ENCODE measurements at regions of chr4 and their contacts with region 1.

Region 1: DNA sequence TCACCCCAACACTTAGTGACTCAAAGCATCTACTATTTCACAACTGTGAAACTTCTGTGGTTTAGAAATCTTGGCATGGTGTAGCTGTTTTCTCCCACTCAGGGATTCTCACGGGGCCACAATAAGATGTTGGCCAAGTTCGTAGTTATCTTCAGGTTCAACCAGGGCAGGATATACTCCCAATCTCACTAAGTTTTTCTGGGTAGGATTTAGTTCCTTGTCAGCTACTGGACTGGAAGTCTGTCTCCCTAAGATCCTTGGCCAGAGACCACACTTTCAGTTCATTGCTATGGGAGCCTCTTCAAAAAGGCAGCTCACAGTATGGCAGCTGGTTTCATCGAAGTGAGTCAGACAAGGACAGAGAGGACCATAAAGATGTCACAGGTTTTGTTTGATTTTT is 111.7 kb upstream of the PDHA2 start:
- DNase-seq: no peak
- ATAC-seq: no peak
- H3K4me3 ChIP-seq: no peak overlapping the region
- H3K4me3 Mint-ChIP-seq: no peak overlapping the region
- H3K27ac ChIP-seq: no peak overlapping the region
- H3K27ac Mint-ChIP-seq: no peak overlapping the region
- H3K4me1 ChIP-seq: no peaks in the 10 kb centered on the region
- H3K4me1 Mint-ChIP-seq: no peaks in the 10 kb centered on the region
- H3K27me3 ChIP-seq: no peaks in the 10 kb centered on the region
- H3K27me3 Mint-ChIP-seq: no peaks in the 10 kb centered on the region
- CTCF ChIP-seq: no peak

Region 2: DNA sequence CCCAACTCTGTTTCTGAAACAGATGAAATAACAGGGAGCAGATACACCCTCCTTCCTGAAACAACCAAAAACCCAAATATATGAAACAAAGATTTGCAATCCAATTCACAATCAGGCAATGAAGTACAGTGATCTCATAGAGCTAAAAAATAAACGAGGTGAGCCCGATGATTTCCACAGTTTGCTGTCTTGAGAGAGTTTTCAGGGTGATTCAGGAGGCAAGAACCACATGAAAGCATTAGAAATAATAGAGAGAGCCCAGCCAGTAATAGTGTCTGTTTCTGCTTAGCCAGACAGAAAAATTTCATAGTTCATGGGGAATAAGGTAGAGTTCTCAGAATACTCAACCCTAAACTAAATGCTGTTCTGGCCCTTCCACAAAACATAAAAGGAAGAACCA is 407.9 kb after region 1 on chr4:
- CTCF ChIA-PET with region 1: no interaction called
- POLR2A ChIA-PET with region 1: no interaction called
- intact Hi-C with region 1: no loop called
- DNase-seq: no peak
- ATAC-seq: no peak
- H3K4me3 ChIP-seq: no peak overlapping the region
- H3K4me3 Mint-ChIP-seq: no peak overlapping the region
- H3K27ac ChIP-seq: no peak overlapping the region
- H3K27ac Mint-ChIP-seq: no peak overlapping the region
- H3K4me1 ChIP-seq: no peaks in the 10 kb centered on the region
- H3K4me1 Mint-ChIP-seq: no peaks in the 10 kb centered on the region
- H3K27me3 ChIP-seq: no peaks in the 10 kb centered on the region
- H3K27me3 Mint-ChIP-seq: no peaks in the 10 kb centered on the region
- CTCF ChIP-seq: no peak

Region 3: DNA sequence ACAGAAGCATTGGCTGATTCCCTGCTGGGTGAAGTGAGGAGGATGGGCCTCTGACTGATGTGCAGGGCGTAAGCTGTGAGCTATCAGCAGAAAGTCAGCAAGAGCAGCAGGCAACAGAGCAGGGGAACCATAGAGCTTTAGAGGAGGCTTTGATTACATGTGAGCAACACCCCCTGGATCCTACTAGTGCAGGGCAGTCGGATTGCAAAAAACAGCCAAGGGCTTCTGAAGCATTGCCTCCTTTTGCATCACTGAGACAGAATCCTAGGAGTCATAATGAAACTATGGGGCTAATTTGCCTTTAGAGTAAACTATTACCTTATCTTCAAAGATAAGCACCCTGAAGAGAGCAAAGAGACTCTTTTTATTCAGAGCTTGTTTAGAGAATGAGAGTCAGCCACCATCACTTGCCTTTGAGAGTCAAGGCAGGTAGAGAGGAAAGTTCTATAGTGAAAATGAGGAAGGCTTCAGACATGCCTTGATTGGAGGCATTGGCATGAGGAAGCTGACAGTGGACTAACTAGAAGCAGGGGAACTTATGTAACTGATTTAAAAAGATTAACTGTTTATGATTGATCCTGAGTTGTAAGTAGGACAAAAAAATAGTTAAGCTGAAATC is 532.0 kb after region 1 on chr4:
- CTCF ChIA-PET with region 1: no interaction called
- POLR2A ChIA-PET with region 1: no interaction called
- intact Hi-C with region 1: loop called in 1 of 2 experiments (anchors 5 kb)
- DNase-seq: no peak
- ATAC-seq: no peak
- H3K4me3 ChIP-seq: no peak overlapping the region
- H3K4me3 Mint-ChIP-seq: no peak overlapping the region
- H3K27ac ChIP-seq: no peak overlapping the region
- H3K27ac Mint-ChIP-seq: no peak overlapping the region
- H3K4me1 ChIP-seq: no peaks in the 10 kb centered on the region
- H3K4me1 Mint-ChIP-seq: no peaks in the 10 kb centered on the region
- H3K27me3 ChIP-seq: no peaks in the 10 kb centered on the region
- H3K27me3 Mint-ChIP-seq: no peaks in the 10 kb centered on the region
- CTCF ChIP-seq: no peak